Activated T-helper 1 cell treated with anti-CD3 and anti-CD28 coated beads, Interleukin-12 subunit alpha, Interleukin-12 subunit beta, Interleukin-2, Interleukin-4 antibody, amounts not matched to agents 30 ng/mL and 10 ng/mL and 1 ng/mL, durations not matched to agents 14 hours and 24 hours and 36 hours (primary cell): ENCODE measurements at regions of chr11 and their contacts with region 1.

Region 1: GRCh38 chr11:87660926-87661660 is 514.1 kb downstream of the RAB38 start:
- DNase-seq: no peak
- H3K4me3 Mint-ChIP-seq: no peak overlapping the region
- H3K27ac Mint-ChIP-seq: no peak overlapping the region
- H3K4me1 Mint-ChIP-seq: no peaks in the 10 kb centered on the region
- H3K27me3 Mint-ChIP-seq: no peaks in the 10 kb centered on the region

Region 2: DNA sequence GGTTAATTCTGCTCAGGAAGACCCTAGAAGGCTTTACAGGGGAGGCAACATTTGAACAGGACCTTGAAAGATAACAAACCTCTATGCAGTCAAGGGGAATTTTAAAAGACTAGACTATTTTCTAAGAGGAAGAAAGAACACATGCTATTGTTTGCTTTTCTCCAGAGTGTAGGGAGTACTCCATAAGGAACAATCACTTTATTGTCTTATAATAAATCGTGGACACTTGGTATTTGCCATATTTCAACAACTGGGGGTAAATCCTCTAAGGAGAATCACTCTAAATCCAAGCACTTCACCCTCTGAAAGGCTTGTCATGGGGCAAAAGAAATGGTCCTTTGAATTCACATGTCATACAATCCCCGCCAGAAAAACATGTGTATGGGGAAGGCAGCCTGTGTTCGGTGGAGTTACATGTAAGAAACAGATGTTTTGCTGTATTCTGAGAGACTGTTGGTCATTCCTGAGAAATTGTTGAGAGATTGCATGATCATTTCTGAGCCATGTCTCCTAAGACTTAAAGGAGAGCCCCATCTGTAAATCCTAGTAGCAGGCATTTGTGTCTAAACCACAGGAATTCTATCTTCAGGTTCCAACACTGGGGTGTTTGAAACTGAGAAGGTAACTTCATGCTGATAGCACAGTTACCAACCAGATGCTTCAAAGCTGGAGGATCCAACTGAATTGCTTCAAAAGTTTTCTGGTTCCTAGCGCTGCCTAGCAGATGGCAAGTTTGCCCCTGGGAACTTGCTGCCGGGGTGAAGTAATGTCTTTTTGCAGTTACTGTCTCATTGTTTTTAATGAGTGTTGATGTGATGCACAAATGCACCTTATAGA is 772.7 kb before region 1 on chr11:
- intact Hi-C with region 1: no loop called
- DNase-seq: no peak
- H3K4me3 Mint-ChIP-seq: no peak overlapping the region
- H3K27ac Mint-ChIP-seq: no peak overlapping the region
- H3K4me1 Mint-ChIP-seq: no peaks in the 10 kb centered on the region
- H3K27me3 Mint-ChIP-seq: peaks cover 23% of the 10 kb centered on the region

Region 3: GRCh38 chr11:87545858-87546257 is 115.2 kb before region 1 on chr11:
- intact Hi-C with region 1: no loop called
- DNase-seq: no peak
- H3K4me3 Mint-ChIP-seq: no peak overlapping the region
- H3K27ac Mint-ChIP-seq: no peak overlapping the region
- H3K4me1 Mint-ChIP-seq: no peaks in the 10 kb centered on the region
- H3K27me3 Mint-ChIP-seq: no peaks in the 10 kb centered on the region

Region 4: DNA sequence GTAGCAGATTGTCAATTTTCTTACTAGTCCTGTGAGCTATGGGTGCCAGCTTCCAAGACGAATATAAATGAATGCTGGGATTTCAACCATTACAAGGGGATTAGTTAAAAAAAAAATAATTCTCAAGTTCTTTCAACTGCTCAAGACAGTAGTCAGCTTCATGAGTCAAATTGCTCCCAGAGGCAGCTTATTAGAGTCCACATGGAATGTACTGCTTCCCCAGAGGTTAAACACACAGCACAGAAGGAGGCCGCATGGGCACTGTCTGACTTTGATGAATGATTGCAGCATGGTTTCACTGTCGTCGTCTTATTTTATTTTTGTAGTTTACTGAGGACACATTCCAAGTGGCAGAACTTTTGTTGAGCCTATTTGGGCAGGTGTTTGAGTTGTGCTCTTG is 60.2 kb before region 1 on chr11:
- intact Hi-C with region 1: loop called (anchors 10 kb)
- DNase-seq: no peak
- H3K4me3 Mint-ChIP-seq: no peak overlapping the region
- H3K27ac Mint-ChIP-seq: no peak overlapping the region
- H3K4me1 Mint-ChIP-seq: no peaks in the 10 kb centered on the region
- H3K27me3 Mint-ChIP-seq: no peaks in the 10 kb centered on the region